Panc1 (cell line): ENCODE measurements at regions of chr3 and their contacts with region 1.

Region 1: GRCh38 chr3:133505813-133506212 is 67.7 kb upstream of the CDV3 start:
- DNase-seq: no peak
- ATAC-seq: no peak
- H3K4me3 ChIP-seq: no peak overlapping the region
- H3K27ac ChIP-seq: peak overlapping the region; percentile 78
- H3K4me1 ChIP-seq: peaks cover 10% of the 10 kb centered on the region
- H3K27me3 ChIP-seq: no peaks in the 10 kb centered on the region
- CTCF ChIP-seq: no peak

Region 2: GRCh38 chr3:133562366-133562765 is 56.6 kb after region 1 on chr3:
- CTCF ChIA-PET with region 1: no interaction called
- POLR2A ChIA-PET with region 1: interaction called, 10 read pairs
- in situ Hi-C with region 1: no loop called
- intact Hi-C with region 1: no loop called
- DNase-seq: no peak
- ATAC-seq: no peak
- H3K4me3 ChIP-seq: no peak overlapping the region
- H3K27ac ChIP-seq: peak overlapping the region; percentile 71
- H3K4me1 ChIP-seq: peaks cover 10% of the 10 kb centered on the region; the same call in 1 of the 2 replicates
- H3K27me3 ChIP-seq: no peaks in the 10 kb centered on the region
- CTCF ChIP-seq: no peak